ENCODE measurements at regions of chr1 and their contacts with region 1.

Region 1: GRCh38 chr1:195733826-195734225 is 874.4 kb downstream of the KCNT2 start:
- DNase-seq: no peak
- ATAC-seq: no peak
- H3K4me3 ChIP-seq: no peak overlapping the region
- H3K4me3 Mint-ChIP-seq: no peak overlapping the region
- H3K27ac ChIP-seq: no peak overlapping the region
- H3K27ac Mint-ChIP-seq: no peak overlapping the region
- H3K4me1 ChIP-seq: no peaks in the 10 kb centered on the region
- H3K4me1 Mint-ChIP-seq: no peaks in the 10 kb centered on the region
- H3K27me3 ChIP-seq: no peaks in the 10 kb centered on the region
- H3K27me3 Mint-ChIP-seq: no peaks in the 10 kb centered on the region
- CTCF ChIP-seq: no peak

Region 2: DNA sequence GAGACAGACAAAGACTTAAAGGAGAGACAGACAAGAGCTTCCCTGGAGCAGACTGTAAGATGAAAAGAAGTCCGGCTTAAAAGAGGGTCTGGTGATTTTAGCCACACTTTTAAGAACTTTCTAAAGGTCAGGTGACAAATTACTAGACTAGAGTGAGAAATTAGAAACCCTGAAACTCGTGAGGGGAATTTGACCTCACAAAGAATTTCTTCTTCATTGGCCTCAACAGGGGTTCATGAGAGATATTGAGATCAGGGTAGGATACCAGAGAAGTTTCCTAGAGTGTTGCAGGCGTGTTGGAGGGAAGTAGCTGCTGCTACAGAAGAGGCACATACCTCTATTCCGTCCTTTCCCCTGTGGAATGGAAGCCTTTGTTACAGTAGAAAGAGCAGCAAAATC is 10.0 kb before region 1 on chr1:
- CTCF ChIA-PET with region 1: no interaction called
- POLR2A ChIA-PET with region 1: no interaction called
- intact Hi-C with region 1: loop called in 1 of 2 experiments (anchors 1 kb)
- DNase-seq: no peak
- ATAC-seq: no peak
- H3K4me3 ChIP-seq: no peak overlapping the region
- H3K4me3 Mint-ChIP-seq: no peak overlapping the region
- H3K27ac ChIP-seq: no peak overlapping the region
- H3K27ac Mint-ChIP-seq: no peak overlapping the region
- H3K4me1 ChIP-seq: no peaks in the 10 kb centered on the region
- H3K4me1 Mint-ChIP-seq: no peaks in the 10 kb centered on the region
- H3K27me3 ChIP-seq: no peaks in the 10 kb centered on the region
- H3K27me3 Mint-ChIP-seq: no peaks in the 10 kb centered on the region
- CTCF ChIP-seq: no peak

Measured in CD8-positive, alpha-beta T cell (primary cell).